Heart left ventricle (tissue), 16 donors: ENCODE measurements at regions of chr2 and their contacts with region 1.

Region 1: DNA sequence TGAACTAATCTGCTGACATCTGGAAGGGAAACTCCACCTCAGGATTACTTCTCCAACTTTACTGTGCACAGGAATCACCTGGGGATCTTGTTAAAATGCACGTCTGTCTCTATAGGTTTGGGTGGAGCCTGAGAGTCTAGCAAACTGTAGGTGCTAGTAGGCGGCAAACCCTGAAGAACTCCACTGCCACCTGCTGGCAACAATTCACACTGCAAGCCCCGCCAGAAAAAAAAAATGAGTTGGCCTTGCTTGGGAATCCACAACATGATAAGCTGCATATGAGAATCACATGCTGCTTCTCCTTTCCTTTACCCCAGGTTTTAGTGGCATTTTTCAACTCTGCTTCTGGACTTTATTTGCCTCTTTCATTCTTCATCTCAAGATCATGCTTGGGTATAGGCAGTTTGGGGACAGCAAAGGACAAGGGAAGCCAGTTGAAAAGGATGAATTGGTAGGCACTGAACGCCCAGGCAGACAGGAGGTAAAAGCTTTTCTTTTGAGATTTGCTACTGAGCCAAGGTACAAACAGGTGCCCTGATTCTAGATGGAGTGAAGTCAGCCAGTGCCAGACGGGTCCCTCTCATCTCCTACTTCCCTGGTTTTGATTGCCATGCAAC is 88.8 kb downstream of the VIT start:
- DNase-seq: peak in 4 of 5 donors; percentile 28 to 54 (median 38)
- ATAC-seq: peak; percentile 28 to 65 (median 60)
- H3K4me3 ChIP-seq: no peak overlapping the region
- H3K27ac ChIP-seq: no peak overlapping the region
- H3K4me1 ChIP-seq: peaks cover 0 to 19% (median 0%) of the 10 kb centered on the region in 12 donors
- H3K27me3 ChIP-seq: no peaks in the 10 kb centered on the region
- CTCF ChIP-seq: peak; percentile 83 to 97 (median 94)
- POLR2A ChIP-seq: no peak

Region 2: GRCh38 chr2:36695746-36696415 is 89.4 kb before region 1 on chr2:
- intact Hi-C with region 1: loop called in 1 of 10 experiments (anchors 5 kb)
- DNase-seq: no peak
- ATAC-seq: peak; percentile 42 to 64 (median 47)
- H3K4me3 ChIP-seq: peak overlapping the region in 3 of 12 donors; percentile 38 to 55 (median 47)
- H3K27ac ChIP-seq: peak overlapping the region in 1 of 12 donors; percentile 39
- H3K4me1 ChIP-seq: peaks cover 0 to 3% (median 0%) of the 10 kb centered on the region in 12 donors
- H3K27me3 ChIP-seq: no peaks in the 10 kb centered on the region
- CTCF ChIP-seq: peak in 3 of 12 donors; percentile 15 to 36 (median 25)
- POLR2A ChIP-seq: no peak

Region 3: GRCh38 chr2:37005118-37005868 is 220.0 kb after region 1 on chr2:
- intact Hi-C with region 1: loop called in 7 of 10 experiments (anchors 2 to 10 kb)
- DNase-seq: no peak
- ATAC-seq: peak; percentile 87 to 95 (median 91)
- H3K4me3 ChIP-seq: no peak overlapping the region
- H3K27ac ChIP-seq: peak overlapping the region in 11 of 12 donors; percentile 13 to 80 (median 61)
- H3K4me1 ChIP-seq: peaks cover 0 to 22% (median 0%) of the 10 kb centered on the region in 12 donors
- H3K27me3 ChIP-seq: no peaks in the 10 kb centered on the region
- CTCF ChIP-seq: peak in 10 of 12 donors; percentile 19 to 63 (median 44)
- POLR2A ChIP-seq: no peak